Activated CD8-positive, alpha-beta T cell treated with anti-CD3 and anti-CD28 coated beads, Interleukin-2, amount 10 ng/mL, durations not matched to agents 7 days and 5 days (primary cell): ENCODE measurements at regions of chr22 and their contacts with region 1.

Region 1: GRCh38 chr22:41697126-41697775 is 2.1 kb upstream of the MEI1 start:
- DNase-seq: peak; percentile 94
- ATAC-seq: peak; percentile 82
- H3K4me3 Mint-ChIP-seq: no peak overlapping the region
- H3K27ac Mint-ChIP-seq: peak overlapping the region; percentile 78
- H3K4me1 Mint-ChIP-seq: peaks cover 12% of the 10 kb centered on the region
- H3K27me3 Mint-ChIP-seq: peaks cover 6% of the 10 kb centered on the region

Region 2: GRCh38 chr22:41713004-41713403 is 15.8 kb after region 1 on chr22:
- CTCF ChIA-PET with region 1: interaction called, 34 read pairs
- POLR2A ChIA-PET with region 1: no interaction called
- DNase-seq: no peak
- ATAC-seq: no peak
- H3K4me3 Mint-ChIP-seq: no peak overlapping the region
- H3K27ac Mint-ChIP-seq: no peak overlapping the region
- H3K4me1 Mint-ChIP-seq: no peaks in the 10 kb centered on the region
- H3K27me3 Mint-ChIP-seq: peaks cover 8% of the 10 kb centered on the region

Region 3: GRCh38 chr22:41780746-41781505 is 83.7 kb after region 1 on chr22:
- CTCF ChIA-PET with region 1: interaction called, 41 read pairs
- POLR2A ChIA-PET with region 1: interaction called, 11 read pairs
- DNase-seq: peak; percentile 97
- ATAC-seq: peak; percentile 97
- H3K4me3 Mint-ChIP-seq: peak overlapping the region; percentile 87
- H3K27ac Mint-ChIP-seq: peak overlapping the region; percentile 99
- H3K4me1 Mint-ChIP-seq: peaks cover 40% of the 10 kb centered on the region
- H3K27me3 Mint-ChIP-seq: no peaks in the 10 kb centered on the region

Region 4: DNA sequence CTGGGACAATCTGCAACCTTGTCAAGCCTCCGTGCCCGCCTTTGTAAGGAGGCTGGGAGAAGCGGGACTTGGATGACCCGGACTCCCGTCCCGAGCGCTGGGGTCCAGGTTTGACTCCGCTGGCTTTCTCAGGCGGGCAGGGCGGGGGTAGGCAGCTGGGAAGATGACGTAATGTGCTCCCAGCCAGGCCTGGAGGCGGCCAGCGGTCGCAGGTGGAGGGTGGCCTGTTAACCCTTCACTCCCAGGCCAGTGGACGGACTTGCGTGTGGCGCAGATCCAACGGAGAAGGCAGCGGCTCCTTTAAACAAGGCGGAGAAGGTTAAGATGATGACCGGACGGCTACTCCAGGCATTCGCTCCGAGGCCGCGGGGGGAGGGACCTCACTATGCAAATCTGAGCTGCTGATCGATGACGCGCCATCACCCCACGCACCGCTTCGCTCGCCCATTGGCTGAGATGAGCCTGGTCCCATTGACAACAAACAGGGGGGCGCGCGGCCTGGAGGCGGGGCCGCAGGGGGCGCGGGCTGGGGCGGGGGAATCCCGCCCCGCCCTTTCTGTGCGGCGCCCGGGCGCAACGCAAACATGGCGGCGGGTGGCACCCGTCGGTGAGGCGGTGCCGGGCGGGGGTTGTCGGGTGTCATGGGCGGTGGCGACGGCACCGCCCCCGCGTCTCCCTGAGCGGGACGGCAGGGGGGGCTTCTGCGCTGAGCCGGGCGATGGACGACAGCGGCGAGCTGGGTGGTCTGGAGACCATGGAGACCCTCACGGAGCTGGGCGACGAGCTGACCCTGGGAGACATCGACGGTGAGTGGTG is 135.5 kb after region 1 on chr22 and contains the start of gene SREBF2:
- CTCF ChIA-PET with region 1: interaction called, 13 read pairs
- POLR2A ChIA-PET with region 1: interaction called, 5 read pairs
- DNase-seq: peak; percentile 100
- ATAC-seq: peak; percentile 95
- H3K4me3 Mint-ChIP-seq: peak within 1 kb of the TSS; percentile 95
- H3K27ac Mint-ChIP-seq: peak within 1 kb of the TSS; percentile 100
- H3K4me1 Mint-ChIP-seq: peaks cover 41% of the 10 kb centered on the region
- H3K27me3 Mint-ChIP-seq: no peaks in the 10 kb centered on the region
- total RNA-seq, gene SREBF2: 93.0 to 93.7 TPM

Region 5: DNA sequence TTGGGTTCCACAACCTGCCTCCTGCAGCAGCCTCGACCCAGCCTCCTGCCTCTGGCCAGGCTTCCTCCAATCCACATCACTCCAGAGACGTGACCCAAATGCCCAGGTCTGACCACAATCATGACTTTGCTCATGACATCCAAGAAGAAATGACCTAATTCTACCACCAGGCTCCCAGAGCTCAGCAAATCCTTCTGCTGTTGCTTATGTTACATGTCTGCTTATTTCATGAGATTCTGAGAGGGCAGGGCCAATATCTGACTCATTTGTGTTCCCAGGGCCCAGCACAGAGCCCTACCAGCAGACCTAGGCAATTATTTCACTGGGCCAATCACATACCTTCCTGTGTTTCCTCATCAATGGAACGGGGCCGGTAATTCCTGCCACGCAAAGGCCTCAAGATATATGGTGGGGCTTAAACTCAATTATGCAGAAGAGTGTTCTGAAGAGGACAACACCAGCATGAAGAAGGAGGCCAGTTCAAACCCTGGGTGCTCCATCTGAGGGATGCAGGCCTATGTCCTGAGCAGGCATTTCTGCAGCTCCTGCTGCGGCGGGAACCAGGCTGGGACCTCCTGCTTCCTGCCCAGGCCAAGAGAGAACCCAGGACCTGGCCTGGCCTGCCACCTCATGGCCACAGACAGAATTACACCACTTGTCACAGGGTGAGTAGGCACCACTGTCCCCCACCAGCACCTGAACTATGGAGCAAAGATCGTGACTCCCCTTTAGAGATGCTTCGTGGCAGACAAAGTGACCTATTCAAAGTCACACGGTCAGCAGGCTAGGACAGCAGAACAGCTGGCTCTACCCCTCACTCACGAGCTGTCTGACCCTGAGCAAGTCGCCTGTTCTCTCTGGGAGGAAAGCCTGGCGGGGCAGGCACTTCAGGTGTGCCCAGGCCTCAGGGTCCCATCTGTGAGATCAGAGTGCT is 243.8 kb after region 1 on chr22:
- CTCF ChIA-PET with region 1: interaction called, 77 read pairs
- POLR2A ChIA-PET with region 1: interaction called, 8 read pairs
- DNase-seq: peak; percentile 90
- ATAC-seq: peak; percentile 61
- H3K4me3 Mint-ChIP-seq: peak overlapping the region; percentile 27
- H3K27ac Mint-ChIP-seq: peak overlapping the region; percentile 95
- H3K4me1 Mint-ChIP-seq: peaks cover 58% of the 10 kb centered on the region
- H3K27me3 Mint-ChIP-seq: no peaks in the 10 kb centered on the region